Activated T-helper 1 cell treated with anti-CD3 and anti-CD28 coated beads, Interleukin-12 subunit alpha, Interleukin-12 subunit beta, Interleukin-2, Interleukin-4 antibody, amounts not matched to agents 30 ng/mL and 10 ng/mL and 1 ng/mL, durations not matched to agents 14 hours and 24 hours and 36 hours (primary cell): ENCODE measurements at regions of chr9 and their contacts with region 1.

Region 1: GRCh38 chr9:5886114-5886939 is 4.4 kb upstream of the MLANA start:
- DNase-seq: peak; percentile 66
- H3K4me3 Mint-ChIP-seq: no peak overlapping the region
- H3K27ac Mint-ChIP-seq: peak overlapping the region; percentile 52
- H3K4me1 Mint-ChIP-seq: peaks cover 11% of the 10 kb centered on the region
- H3K27me3 Mint-ChIP-seq: no peaks in the 10 kb centered on the region

Region 2: DNA sequence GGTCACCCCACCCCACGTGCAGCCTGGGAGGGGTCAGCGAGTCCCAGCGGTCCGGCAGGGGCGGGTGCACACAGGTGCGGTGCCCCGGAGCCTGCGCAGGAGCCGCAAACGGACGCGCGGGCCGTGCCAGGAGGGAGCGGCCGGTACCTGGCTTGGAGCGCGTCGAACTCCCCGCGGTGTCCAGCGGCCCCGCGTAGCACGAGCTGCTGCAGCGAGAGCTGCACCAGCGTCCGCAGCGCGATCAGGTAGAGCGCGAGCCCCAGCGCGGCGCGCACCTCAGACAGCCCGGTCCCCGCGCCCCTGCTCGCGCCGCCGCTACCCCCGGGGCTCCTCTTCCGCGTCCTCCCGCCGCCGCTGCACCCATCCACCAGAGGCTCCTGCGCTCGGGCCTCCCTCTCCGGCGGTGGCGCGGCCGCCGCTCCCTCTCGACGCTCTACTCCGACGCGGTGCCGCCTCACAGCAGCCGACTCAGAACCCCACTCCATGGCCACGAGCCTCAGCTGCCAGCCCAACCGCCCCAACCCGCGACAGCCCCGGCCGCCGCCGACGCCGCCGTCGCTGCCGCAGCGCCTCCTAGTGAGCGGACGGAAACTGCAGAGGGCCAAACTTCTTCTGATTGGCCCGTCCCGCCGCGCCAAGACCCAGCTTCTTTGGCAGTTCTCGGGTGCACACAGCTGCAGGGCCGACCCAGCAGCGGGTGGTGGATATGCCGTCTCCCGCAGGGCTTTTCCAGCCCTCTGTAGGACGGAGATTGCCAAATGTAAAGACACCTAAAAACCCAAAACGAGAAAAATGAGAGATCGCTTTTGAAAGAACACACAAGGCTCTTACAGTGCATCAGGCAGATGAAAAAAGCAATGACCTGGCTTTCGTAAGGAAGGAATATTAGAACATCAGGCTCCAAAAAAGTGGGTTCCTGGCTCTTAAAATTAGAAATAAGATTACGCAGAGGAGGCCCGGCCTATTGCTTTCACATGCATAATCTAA is 53.5 kb before region 1 on chr9 and contains the start of gene ERMP1:
- intact Hi-C with region 1: loop called (anchors 1 kb)
- DNase-seq: peak; percentile 89
- H3K4me3 Mint-ChIP-seq: peak within 1 kb of the TSS; percentile 92
- H3K27ac Mint-ChIP-seq: peak within 1 kb of the TSS; percentile 82
- H3K4me1 Mint-ChIP-seq: peaks cover 62% of the 10 kb centered on the region
- H3K27me3 Mint-ChIP-seq: no peaks in the 10 kb centered on the region
- total RNA-seq, gene ERMP1: 23.1 and 24.1 TPM in 2 replicates

Region 3: DNA sequence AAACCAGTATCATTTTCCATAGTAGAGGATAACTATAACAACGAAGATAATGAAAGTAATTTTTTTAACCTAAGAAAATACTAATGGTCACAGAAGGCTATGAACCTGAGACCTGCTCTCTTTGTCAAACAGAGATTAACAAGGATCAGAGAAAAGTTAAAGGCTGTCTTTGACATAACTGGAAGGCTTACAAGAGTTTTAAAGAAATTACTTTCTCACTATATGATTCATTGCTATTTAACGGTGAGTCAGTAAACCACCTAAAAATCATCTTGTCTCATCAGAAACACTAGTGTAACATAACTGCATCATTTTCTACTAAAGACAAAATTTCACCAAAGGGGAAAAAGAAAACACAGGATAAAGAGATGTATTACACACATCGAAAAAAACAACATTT is 23.6 kb after region 1 on chr9:
- intact Hi-C with region 1: loop called (anchors 2 kb)
- DNase-seq: no peak
- H3K4me3 Mint-ChIP-seq: no peak overlapping the region
- H3K27ac Mint-ChIP-seq: peak overlapping the region; percentile 84
- H3K4me1 Mint-ChIP-seq: peaks cover 17% of the 10 kb centered on the region
- H3K27me3 Mint-ChIP-seq: no peaks in the 10 kb centered on the region

Region 4: DNA sequence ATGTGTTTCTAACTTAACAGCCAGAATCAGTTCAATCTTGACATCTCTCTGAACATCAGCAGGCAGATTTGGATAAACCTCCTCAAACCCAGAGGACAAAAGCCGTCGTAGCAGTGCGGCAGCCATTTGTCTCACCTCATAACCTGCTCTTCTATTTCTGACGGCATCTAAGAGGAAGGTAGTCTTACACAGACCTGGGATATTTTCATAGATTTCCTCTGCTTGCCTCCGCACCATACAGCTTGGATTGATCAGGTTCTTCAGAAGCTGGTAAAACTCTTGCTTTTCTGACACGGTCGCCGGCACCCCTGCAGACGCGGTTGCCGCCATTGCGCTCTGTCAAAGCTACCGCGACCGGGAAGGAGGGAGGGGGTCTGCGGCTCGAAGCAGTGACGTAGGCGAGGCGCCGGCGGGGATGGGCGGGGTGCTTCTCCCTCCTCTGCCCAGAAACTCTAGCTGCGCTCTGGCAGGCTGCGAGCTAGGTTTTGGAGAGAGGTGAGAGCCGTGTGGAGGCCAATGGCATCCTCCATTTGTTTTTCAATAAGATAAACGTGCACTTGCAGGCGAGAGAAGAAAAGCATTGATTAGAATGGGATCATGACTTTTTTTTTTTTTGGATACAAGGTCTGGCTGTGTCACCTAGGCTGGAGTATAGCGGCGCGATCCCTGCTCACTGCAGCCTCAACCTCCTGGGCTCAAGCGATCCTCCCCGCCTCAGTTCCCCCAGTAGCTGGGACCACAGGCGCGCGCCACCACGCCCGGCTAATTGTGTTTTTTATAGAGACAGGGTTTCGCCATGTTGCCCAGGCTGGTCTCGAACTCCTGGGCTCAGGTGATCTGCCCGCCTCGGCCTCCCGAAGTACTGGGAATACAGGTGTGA is 129.2 kb after region 1 on chr9 and contains the start of gene RANBP6:
- intact Hi-C with region 1: loop called (anchors 2 kb)
- DNase-seq: peak; percentile 86
- H3K4me3 Mint-ChIP-seq: peak within 1 kb of the TSS; percentile 96
- H3K27ac Mint-ChIP-seq: peak within 1 kb of the TSS; percentile 97
- H3K4me1 Mint-ChIP-seq: peaks cover 49% of the 10 kb centered on the region
- H3K27me3 Mint-ChIP-seq: no peaks in the 10 kb centered on the region
- total RNA-seq, gene RANBP6: 19.2 and 22.7 TPM in 2 replicates

Region 5: GRCh38 chr9:6055213-6055612 is 168.9 kb after region 1 on chr9:
- intact Hi-C with region 1: loop called (anchors 1 kb)
- DNase-seq: peak; percentile 36
- H3K4me3 Mint-ChIP-seq: no peak overlapping the region
- H3K27ac Mint-ChIP-seq: no peak overlapping the region
- H3K4me1 Mint-ChIP-seq: peaks cover under 1% of the 10 kb centered on the region
- H3K27me3 Mint-ChIP-seq: peaks cover 19% of the 10 kb centered on the region